ENCODE measurements at regions of chr3 and their contacts with region 1.

Region 1: GRCh38 chr3:38651154-38651789 is 1.8 kb upstream of the SCN5A start:
- DNase-seq: peak; percentile 79
- H3K4me3 ChIP-seq: peak overlapping the region in 1 of 2 experiments; percentile 28; a peak in 1 of 4 replicates
- H3K27ac ChIP-seq: no peak overlapping the region
- H3K4me1 ChIP-seq: peaks cover 0 to 17% of the 10 kb centered on the region in 2 experiments; a peak in 1 of 4 replicates
- H3K27me3 ChIP-seq: peaks cover 12% of the 10 kb centered on the region; the same call in 1 of the 2 replicates
- CTCF ChIP-seq: peak; percentile 90
- EP300 ChIP-seq: no peak
- RAD21 ChIP-seq: peak; percentile 96

Region 2: GRCh38 chr3:38268526-38268925 is 382.7 kb before region 1 on chr3:
- CTCF ChIA-PET with region 1: no interaction called
- POLR2A ChIA-PET with region 1: no interaction called
- DNase-seq: no peak
- H3K4me3 ChIP-seq: no peak overlapping the region
- H3K27ac ChIP-seq: no peak overlapping the region
- H3K4me1 ChIP-seq: peaks cover 0 to 27% of the 10 kb centered on the region in 2 experiments; a peak in 1 of 4 replicates
- H3K27me3 ChIP-seq: no peaks in the 10 kb centered on the region
- CTCF ChIP-seq: no peak
- EP300 ChIP-seq: no peak
- RAD21 ChIP-seq: no peak

Region 3: GRCh38 chr3:38479431-38480092 is 171.7 kb before region 1 on chr3:
- CTCF ChIA-PET with region 1: interaction called, 12 read pairs
- POLR2A ChIA-PET with region 1: no interaction called
- DNase-seq: peak; percentile 87
- H3K4me3 ChIP-seq: no peak overlapping the region
- H3K27ac ChIP-seq: no peak overlapping the region
- H3K4me1 ChIP-seq: peaks cover 0 to 20% of the 10 kb centered on the region in 2 experiments; a peak in 1 of 4 replicates
- H3K27me3 ChIP-seq: no peaks in the 10 kb centered on the region
- CTCF ChIP-seq: peak; percentile 95
- EP300 ChIP-seq: no peak
- RAD21 ChIP-seq: peak; percentile 96

Region 4: GRCh38 chr3:38507120-38507519 is 144.2 kb before region 1 on chr3:
- CTCF ChIA-PET with region 1: interaction called, 16 read pairs
- POLR2A ChIA-PET with region 1: no interaction called
- DNase-seq: no peak
- H3K4me3 ChIP-seq: no peak overlapping the region
- H3K27ac ChIP-seq: no peak overlapping the region
- H3K4me1 ChIP-seq: no peaks in the 10 kb centered on the region; a peak in 1 of 4 replicates
- H3K27me3 ChIP-seq: no peaks in the 10 kb centered on the region
- CTCF ChIP-seq: no peak
- EP300 ChIP-seq: no peak
- RAD21 ChIP-seq: no peak

Region 5: GRCh38 chr3:38536686-38537085 is 114.6 kb before region 1 on chr3:
- CTCF ChIA-PET with region 1: interaction called, 27 read pairs
- POLR2A ChIA-PET with region 1: no interaction called
- DNase-seq: no peak
- H3K4me3 ChIP-seq: no peak overlapping the region
- H3K27ac ChIP-seq: no peak overlapping the region
- H3K4me1 ChIP-seq: peaks cover 0 to 11% of the 10 kb centered on the region in 2 experiments; a peak in 1 of 4 replicates
- H3K27me3 ChIP-seq: no peaks in the 10 kb centered on the region
- CTCF ChIP-seq: no peak
- EP300 ChIP-seq: no peak
- RAD21 ChIP-seq: no peak

Region 6: GRCh38 chr3:38574411-38575278 is 76.6 kb before region 1 on chr3:
- CTCF ChIA-PET with region 1: interaction called, 33 read pairs
- POLR2A ChIA-PET with region 1: no interaction called
- DNase-seq: peak; percentile 74
- H3K4me3 ChIP-seq: no peak overlapping the region
- H3K27ac ChIP-seq: peak overlapping the region in 1 of 2 experiments; percentile 83; a peak in 2 of 4 replicates
- H3K4me1 ChIP-seq: peaks cover 0 to 44% of the 10 kb centered on the region in 2 experiments; a peak in 1 of 4 replicates
- H3K27me3 ChIP-seq: no peaks in the 10 kb centered on the region
- CTCF ChIP-seq: no peak
- EP300 ChIP-seq: peak in 1 of 2 experiments; percentile 61; a peak in 1 of 4 replicates
- RAD21 ChIP-seq: no peak; the same call in 1 of the 2 replicates

Region 7: GRCh38 chr3:38640661-38641452 is 10.4 kb before region 1 on chr3:
- CTCF ChIA-PET with region 1: interaction called, 62 read pairs
- POLR2A ChIA-PET with region 1: no interaction called
- DNase-seq: no peak
- H3K4me3 ChIP-seq: no peak overlapping the region
- H3K27ac ChIP-seq: no peak overlapping the region
- H3K4me1 ChIP-seq: no peaks in the 10 kb centered on the region
- H3K27me3 ChIP-seq: no peaks in the 10 kb centered on the region
- CTCF ChIP-seq: no peak
- EP300 ChIP-seq: no peak
- RAD21 ChIP-seq: no peak

Region 8: DNA sequence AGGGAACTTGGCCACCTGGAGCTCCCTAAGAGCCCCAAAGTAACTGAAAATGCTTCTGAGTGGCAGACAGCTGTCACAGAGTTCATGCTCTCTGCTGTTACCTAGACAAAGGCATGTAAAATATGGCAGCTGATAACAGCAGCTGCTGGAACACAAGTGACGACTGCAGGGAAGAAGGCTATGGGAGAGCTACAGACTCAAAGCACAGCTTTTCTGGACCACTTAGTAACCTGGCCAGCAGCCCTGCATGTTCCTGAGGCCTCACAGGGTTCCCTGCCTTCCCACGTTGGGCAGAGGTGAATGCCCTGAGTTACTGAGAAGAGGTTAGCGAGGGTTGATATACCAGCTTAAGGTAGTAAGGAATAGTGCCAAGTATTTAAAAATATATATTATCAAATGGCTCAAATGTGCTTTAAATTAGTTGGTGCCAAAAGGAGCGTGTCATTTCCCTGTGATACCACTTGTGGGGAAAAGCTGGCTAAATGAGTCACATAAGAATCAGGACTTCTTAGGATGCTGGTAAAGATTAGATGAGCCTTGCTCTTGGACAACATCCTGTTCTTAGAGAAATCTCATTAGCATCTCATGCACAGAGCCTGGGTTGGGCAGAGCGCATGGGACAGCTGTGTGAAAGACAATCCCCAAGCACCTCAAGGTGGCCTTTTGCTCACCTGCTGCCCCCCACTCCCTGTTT is 74.6 kb after region 1 on chr3:
- CTCF ChIA-PET with region 1: interaction called, 12 read pairs
- POLR2A ChIA-PET with region 1: no interaction called
- DNase-seq: peak; percentile 27
- H3K4me3 ChIP-seq: no peak overlapping the region
- H3K27ac ChIP-seq: peak overlapping the region in 1 of 2 experiments; percentile 55; a peak in 2 of 4 replicates
- H3K4me1 ChIP-seq: peaks cover 0 to 42% of the 10 kb centered on the region in 2 experiments; a peak in 3 of 4 replicates
- H3K27me3 ChIP-seq: no peaks in the 10 kb centered on the region
- CTCF ChIP-seq: no peak
- EP300 ChIP-seq: peak in 1 of 2 experiments; percentile 18; a peak in 1 of 4 replicates
- RAD21 ChIP-seq: no peak